Breast epithelium (tissue), 4 donors: ENCODE measurements at regions of chr15 and their contacts with region 1.

Region 1: GRCh38 chr15:36951731-36952247 is 148.6 kb downstream of the MEIS2 start:
- DNase-seq: no peak
- H3K4me3 ChIP-seq: no peak overlapping the region
- H3K27ac ChIP-seq: no peak overlapping the region
- H3K4me1 ChIP-seq: no peaks in the 10 kb centered on the region
- H3K27me3 ChIP-seq: no peaks in the 10 kb centered on the region
- CTCF ChIP-seq: no peak
- POLR2A ChIP-seq: no peak

Region 2: DNA sequence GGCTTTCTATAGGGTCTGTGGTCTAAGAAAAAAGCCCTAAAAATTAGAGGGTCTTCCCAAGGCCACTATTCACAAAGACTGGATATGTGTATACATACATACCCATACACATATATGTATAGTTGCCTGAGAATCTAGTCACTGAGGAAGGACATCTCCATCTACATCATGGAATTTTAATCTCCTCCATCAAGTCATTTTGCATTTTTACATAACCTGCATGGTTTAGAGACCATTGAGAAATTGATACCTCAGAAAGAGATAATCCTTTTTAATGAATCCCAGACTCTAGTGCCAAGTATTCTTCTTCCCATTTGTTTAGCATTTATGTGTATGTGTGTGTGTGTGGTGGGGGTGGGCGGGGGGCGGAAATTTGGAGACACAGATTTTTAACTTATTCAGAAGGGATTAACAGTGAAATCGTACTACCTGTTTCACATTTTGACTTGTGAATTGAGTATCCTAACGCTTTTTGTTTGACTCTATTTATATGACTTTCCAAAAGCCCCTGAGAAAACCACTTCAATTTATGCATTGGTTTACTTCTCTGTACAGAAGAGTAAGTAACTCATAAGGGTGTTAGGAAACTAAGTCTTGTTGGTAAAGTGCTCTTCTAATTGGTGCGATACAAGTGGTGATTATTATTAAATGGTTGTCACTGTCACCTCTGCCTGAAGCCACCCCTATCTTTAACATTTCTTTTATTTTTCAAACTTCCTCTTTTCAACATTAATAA is 18.4 kb before region 1 on chr15:
- intact Hi-C with region 1: loop called (anchors 1 kb)
- DNase-seq: no peak
- H3K4me3 ChIP-seq: no peak overlapping the region
- H3K27ac ChIP-seq: no peak overlapping the region
- H3K4me1 ChIP-seq: no peaks in the 10 kb centered on the region
- H3K27me3 ChIP-seq: no peaks in the 10 kb centered on the region
- CTCF ChIP-seq: no peak
- POLR2A ChIP-seq: no peak

Region 3: GRCh38 chr15:36965570-36966342 is 14.0 kb after region 1 on chr15:
- intact Hi-C with region 1: no loop called
- DNase-seq: no peak
- H3K4me3 ChIP-seq: no peak overlapping the region
- H3K27ac ChIP-seq: no peak overlapping the region
- H3K4me1 ChIP-seq: no peaks in the 10 kb centered on the region
- H3K27me3 ChIP-seq: no peaks in the 10 kb centered on the region
- CTCF ChIP-seq: no peak
- POLR2A ChIP-seq: no peak